Dendritic cell treated with granulocyte-macrophage colony-stimulating factor and Interleukin-4, amounts not matched to agents 40 ng/mL and 50 ng/mL, for 4 days (primary cell): ENCODE measurements at regions of chr5 and their contacts with region 1.

Region 1: GRCh38 chr5:146965761-146966659 is 87.5 kb upstream of the PPP2R2B start:
- H3K4me3 Mint-ChIP-seq: no peak overlapping the region
- H3K27ac Mint-ChIP-seq: no peak overlapping the region
- H3K4me1 Mint-ChIP-seq: no peaks in the 10 kb centered on the region
- H3K27me3 Mint-ChIP-seq: no peaks in the 10 kb centered on the region

Region 2: DNA sequence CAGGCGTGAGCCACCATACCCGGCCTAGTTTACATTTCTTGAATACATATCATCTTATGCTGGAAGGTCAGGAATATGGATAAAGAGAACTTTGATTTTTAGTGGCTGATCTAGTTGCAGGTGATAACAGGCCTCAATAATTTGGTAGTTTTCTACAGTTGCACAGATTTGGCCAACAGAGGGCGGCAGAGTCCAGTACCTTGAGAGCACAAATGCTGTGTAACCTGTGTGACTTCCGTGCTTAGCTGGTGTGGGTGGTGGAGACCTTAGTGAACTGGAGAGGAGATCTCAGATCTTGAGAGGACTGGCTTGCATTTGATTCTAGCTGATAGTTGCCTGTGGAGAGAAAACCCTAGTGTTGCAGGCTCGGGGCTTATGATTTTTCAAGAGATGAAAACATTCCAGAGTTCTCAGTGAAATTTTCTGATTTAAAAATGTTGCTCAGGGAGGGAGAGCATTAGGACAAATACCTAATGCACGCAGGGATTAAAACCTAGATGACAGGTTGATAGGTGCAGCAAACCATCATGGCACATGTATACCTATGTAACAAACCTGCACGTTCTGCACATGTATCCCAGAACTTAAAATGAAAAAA is 432.7 kb before region 1 on chr5:
- intact Hi-C with region 1: loop called (anchors 2 kb)
- H3K4me3 Mint-ChIP-seq: no peak overlapping the region
- H3K27ac Mint-ChIP-seq: no peak overlapping the region
- H3K4me1 Mint-ChIP-seq: peaks cover 6% of the 10 kb centered on the region
- H3K27me3 Mint-ChIP-seq: no peaks in the 10 kb centered on the region

Region 3: DNA sequence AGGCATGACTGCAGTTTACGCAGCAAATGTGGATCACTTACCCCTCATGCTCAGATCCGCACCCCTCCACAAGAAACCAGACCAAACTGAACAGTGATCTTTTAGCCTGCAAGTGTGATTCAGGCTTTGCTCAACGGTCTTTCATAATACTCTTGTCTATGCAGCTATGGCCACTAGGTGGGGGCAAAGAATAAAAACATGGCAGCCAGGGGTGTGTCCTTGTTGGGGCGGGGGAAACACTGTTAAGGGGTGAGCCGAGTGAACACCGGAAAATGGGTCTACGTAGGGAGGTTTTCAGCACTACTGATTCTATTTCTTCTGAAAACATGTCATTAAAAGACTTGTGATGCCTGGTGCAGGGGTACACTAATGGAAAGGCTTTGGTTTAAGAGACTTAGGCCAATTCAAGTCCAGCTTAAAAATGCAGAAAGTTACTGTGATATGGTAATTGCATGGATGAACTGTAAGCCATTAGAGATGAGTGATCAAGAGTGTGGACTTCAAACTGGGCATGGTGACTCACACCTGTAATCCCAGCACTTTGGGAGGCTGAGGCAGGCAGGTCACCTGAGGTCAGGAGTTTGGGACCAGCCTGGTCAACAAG is 400.1 kb before region 1 on chr5:
- intact Hi-C with region 1: loop called (anchors 1 kb)
- H3K4me3 Mint-ChIP-seq: no peak overlapping the region
- H3K27ac Mint-ChIP-seq: no peak overlapping the region
- H3K4me1 Mint-ChIP-seq: no peaks in the 10 kb centered on the region
- H3K27me3 Mint-ChIP-seq: no peaks in the 10 kb centered on the region

Region 4: GRCh38 chr5:146662229-146662628 is 303.8 kb before region 1 on chr5:
- intact Hi-C with region 1: loop called (anchors 1 kb)
- H3K4me3 Mint-ChIP-seq: no peak overlapping the region
- H3K27ac Mint-ChIP-seq: no peak overlapping the region
- H3K4me1 Mint-ChIP-seq: no peaks in the 10 kb centered on the region
- H3K27me3 Mint-ChIP-seq: no peaks in the 10 kb centered on the region